ENCODE measurements at regions of chr12 and their contacts with region 1.

Region 1: DNA sequence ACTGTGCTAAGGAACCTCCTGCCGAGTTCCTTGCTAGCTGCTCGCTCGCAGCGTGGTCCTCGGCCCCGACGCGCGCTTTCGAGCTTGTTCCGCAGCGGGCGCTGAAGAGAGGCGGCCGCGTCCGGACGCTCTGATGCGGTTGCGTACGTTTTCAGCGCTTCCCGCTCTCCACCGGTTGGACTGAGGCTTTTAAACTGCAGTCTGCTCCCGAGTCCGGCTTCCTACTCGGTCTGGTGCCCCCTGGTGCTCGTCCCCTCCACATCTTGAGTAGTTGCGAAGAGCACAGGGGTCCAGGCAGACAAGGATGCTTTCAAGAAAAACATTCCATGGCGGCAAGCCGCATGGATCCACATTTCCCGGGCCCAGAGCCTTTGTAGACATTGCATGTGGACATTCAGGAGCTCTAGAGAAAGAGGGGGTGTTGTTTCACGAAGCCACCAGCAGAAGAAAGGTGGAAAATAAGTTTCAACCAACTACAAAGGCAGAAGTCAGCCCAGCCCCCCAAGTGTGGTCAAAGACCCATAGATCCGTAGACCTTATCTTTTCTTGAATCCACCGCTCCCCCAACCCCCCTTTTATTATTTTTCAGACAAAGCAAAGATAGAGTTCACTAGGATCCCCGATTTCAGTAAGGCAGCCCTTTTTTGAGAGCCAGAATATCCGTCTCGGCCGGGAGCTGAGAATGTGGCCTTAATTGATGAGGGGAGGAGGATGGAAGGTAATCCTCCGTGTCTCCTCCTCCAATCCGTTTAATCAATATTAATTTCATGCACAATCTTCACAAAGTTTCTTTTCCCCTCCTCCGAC is 984 bp upstream of the WNK1 start:
- DNase-seq: peak; percentile 96
- ATAC-seq: peak; percentile 57
- H3K4me3 Mint-ChIP-seq: no peak overlapping the region
- H3K27ac Mint-ChIP-seq: no peak overlapping the region
- H3K4me1 Mint-ChIP-seq: peaks cover 24% of the 10 kb centered on the region
- H3K27me3 Mint-ChIP-seq: no peaks in the 10 kb centered on the region

Region 2: GRCh38 chr12:569803-570434 is 181.5 kb before region 1 on chr12:
- CTCF ChIA-PET with region 1: interaction called, 90 read pairs
- POLR2A ChIA-PET with region 1: interaction called, 36 read pairs
- DNase-seq: peak; percentile 91
- ATAC-seq: peak; percentile 97
- H3K4me3 Mint-ChIP-seq: peak overlapping the region; percentile 80
- H3K27ac Mint-ChIP-seq: peak overlapping the region; percentile 73
- H3K4me1 Mint-ChIP-seq: peaks cover 57% of the 10 kb centered on the region
- H3K27me3 Mint-ChIP-seq: no peaks in the 10 kb centered on the region

Region 3: GRCh38 chr12:614411-614970 is 136.9 kb before region 1 on chr12:
- CTCF ChIA-PET with region 1: interaction called, 62 read pairs
- POLR2A ChIA-PET with region 1: interaction called, 17 read pairs
- DNase-seq: peak; percentile 46
- ATAC-seq: no peak
- H3K4me3 Mint-ChIP-seq: no peak overlapping the region
- H3K27ac Mint-ChIP-seq: no peak overlapping the region
- H3K4me1 Mint-ChIP-seq: peaks cover 72% of the 10 kb centered on the region
- H3K27me3 Mint-ChIP-seq: no peaks in the 10 kb centered on the region

Region 4: DNA sequence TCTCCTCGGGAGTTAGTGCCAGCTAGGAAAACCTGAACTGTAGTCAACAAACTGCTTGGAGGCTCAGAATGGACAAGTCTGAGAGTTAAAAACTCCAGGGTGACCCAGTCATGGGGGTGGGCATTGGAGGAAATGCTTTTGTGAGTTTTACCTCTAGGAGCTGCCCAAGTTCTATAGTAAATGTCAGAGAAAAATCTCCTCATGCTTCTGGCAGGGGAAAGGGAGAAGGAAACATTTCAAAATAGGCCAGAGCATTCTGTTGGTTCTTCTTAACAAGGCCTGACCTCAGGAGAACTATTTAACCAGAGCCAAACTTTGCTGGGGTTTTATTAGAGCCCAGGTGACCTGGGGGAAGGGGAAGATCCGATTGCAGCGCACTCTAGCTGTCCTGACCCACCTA is 100.4 kb before region 1 on chr12:
- CTCF ChIA-PET with region 1: interaction called, 33 read pairs
- POLR2A ChIA-PET with region 1: interaction called, 39 read pairs
- DNase-seq: no peak
- ATAC-seq: no peak
- H3K4me3 Mint-ChIP-seq: no peak overlapping the region
- H3K27ac Mint-ChIP-seq: no peak overlapping the region
- H3K4me1 Mint-ChIP-seq: peaks cover 10% of the 10 kb centered on the region
- H3K27me3 Mint-ChIP-seq: no peaks in the 10 kb centered on the region

Region 5: DNA sequence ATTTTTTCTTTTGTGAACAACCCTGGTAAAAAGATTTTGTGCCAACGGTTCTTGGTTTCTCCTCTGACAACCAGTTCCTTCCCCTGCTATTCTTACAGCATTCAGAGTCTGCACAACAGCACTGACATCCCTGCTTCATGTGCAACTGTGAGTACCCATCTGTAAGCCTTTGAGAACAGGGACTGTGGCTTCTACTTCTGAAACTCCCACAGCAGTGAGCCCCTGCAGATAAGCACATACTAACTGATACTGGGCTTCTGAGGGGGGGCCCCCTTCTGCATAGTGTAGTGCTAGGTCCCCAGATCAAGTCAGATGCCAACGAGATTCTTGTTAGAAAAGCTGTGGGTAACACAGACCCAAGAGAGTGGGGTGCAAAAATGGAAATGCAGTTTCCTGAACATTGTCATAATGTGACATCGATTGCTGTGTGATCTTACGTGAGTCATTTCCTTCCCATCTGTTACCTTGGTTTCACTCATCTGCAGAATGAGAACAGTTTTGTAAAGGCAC is 77.1 kb before region 1 on chr12:
- CTCF ChIA-PET with region 1: interaction called, 88 read pairs
- POLR2A ChIA-PET with region 1: interaction called, 37 read pairs
- DNase-seq: peak; percentile 82
- ATAC-seq: peak; percentile 92
- H3K4me3 Mint-ChIP-seq: peak overlapping the region; percentile 61
- H3K27ac Mint-ChIP-seq: peak overlapping the region; percentile 94
- H3K4me1 Mint-ChIP-seq: peaks cover 70% of the 10 kb centered on the region
- H3K27me3 Mint-ChIP-seq: no peaks in the 10 kb centered on the region

Region 6: GRCh38 chr12:724194-724855 is 27.1 kb before region 1 on chr12:
- CTCF ChIA-PET with region 1: interaction called, 123 read pairs
- POLR2A ChIA-PET with region 1: interaction called, 57 read pairs
- DNase-seq: peak; percentile 46
- ATAC-seq: peak; percentile 77
- H3K4me3 Mint-ChIP-seq: peak overlapping the region; percentile 11
- H3K27ac Mint-ChIP-seq: peak overlapping the region; percentile 78
- H3K4me1 Mint-ChIP-seq: peaks cover 72% of the 10 kb centered on the region
- H3K27me3 Mint-ChIP-seq: no peaks in the 10 kb centered on the region

Region 7: GRCh38 chr12:810671-811415 is 59.4 kb after region 1 on chr12:
- CTCF ChIA-PET with region 1: interaction called, 79 read pairs
- POLR2A ChIA-PET with region 1: interaction called, 5 read pairs
- DNase-seq: no peak
- ATAC-seq: peak; percentile 49
- H3K4me3 Mint-ChIP-seq: no peak overlapping the region
- H3K27ac Mint-ChIP-seq: no peak overlapping the region
- H3K4me1 Mint-ChIP-seq: peaks cover 70% of the 10 kb centered on the region
- H3K27me3 Mint-ChIP-seq: no peaks in the 10 kb centered on the region

Region 8: DNA sequence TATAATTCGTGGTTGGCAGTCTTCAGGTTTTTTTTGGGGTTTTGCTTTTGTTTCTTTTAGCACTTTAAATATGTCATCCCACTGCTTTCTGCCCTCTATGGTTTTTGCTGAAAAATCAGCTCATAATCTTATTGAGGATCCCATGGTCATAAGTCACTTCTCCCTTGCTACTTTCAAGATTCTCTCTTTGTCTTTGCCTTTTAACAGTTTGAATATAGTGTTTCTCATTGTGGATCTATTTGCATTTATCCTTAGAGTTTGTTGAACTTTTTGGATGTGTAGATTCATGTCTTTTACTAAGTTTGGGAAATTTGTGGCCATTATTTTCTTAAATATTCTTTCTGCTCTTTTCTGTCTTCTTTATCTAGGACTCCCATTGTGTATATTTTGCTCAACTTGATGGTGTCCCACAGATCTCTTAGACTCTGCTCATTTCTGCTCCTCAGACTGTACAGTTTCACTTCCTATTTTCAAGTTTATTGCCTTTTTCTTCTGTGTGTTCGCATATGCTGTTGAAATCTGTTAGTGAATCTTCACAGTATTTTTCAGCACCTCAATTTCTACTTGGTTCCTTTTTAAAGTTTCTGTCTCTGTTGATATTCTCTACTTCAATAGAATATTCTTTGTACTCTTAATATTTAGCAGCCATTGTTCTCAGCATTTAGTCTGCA is 71.8 kb after region 1 on chr12:
- CTCF ChIA-PET with region 1: no interaction called
- POLR2A ChIA-PET with region 1: no interaction called
- DNase-seq: no peak
- ATAC-seq: no peak
- H3K4me3 Mint-ChIP-seq: no peak overlapping the region
- H3K27ac Mint-ChIP-seq: peak overlapping the region; percentile 16
- H3K4me1 Mint-ChIP-seq: peaks cover 29% of the 10 kb centered on the region
- H3K27me3 Mint-ChIP-seq: no peaks in the 10 kb centered on the region

Region 9: DNA sequence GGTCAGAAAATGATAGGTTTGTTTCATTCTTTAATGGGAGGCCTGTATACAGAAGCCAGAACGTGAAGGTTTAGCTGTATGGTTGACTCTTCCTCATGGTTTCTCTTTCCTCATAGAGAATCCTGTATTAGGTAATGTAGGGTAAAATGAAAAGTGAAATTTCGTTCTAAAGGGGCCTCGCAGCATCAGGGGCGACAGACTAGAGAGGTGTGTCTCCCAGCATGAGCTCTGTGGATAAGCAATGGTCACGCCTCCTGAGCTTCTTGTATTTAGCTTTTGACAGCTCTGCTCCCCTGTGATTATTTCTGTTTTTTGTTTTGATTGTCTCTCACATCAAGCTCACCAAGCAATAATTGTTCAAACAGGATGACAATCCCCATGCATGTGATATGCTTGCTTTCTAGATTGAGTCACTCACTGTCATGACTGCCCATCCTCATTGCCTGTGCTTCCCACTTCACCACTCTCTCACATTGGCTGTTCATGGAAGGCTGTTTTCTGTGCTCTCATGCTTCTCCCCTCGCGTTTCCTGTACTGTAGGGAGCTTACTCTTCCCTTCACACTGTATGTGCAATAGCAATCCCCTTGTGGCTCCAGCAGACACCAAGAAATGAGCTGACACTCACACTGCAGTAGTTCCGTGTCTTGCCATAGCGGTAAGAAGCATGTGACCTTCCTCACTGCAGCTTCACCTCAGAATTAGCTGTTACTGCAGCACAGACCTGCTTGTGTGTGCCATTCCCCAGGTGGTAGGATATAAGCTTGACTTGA is 154.1 kb after region 1 on chr12:
- CTCF ChIA-PET with region 1: no interaction called
- POLR2A ChIA-PET with region 1: no interaction called
- DNase-seq: peak; percentile 35
- ATAC-seq: peak; percentile 66
- H3K4me3 Mint-ChIP-seq: peak overlapping the region; percentile 34
- H3K27ac Mint-ChIP-seq: peak overlapping the region; percentile 60
- H3K4me1 Mint-ChIP-seq: peaks cover 42% of the 10 kb centered on the region
- H3K27me3 Mint-ChIP-seq: no peaks in the 10 kb centered on the region